Endothelial cell of umbilical vein (primary cell): ENCODE measurements at regions of chr19 and their contacts with region 1.

Region 1: DNA sequence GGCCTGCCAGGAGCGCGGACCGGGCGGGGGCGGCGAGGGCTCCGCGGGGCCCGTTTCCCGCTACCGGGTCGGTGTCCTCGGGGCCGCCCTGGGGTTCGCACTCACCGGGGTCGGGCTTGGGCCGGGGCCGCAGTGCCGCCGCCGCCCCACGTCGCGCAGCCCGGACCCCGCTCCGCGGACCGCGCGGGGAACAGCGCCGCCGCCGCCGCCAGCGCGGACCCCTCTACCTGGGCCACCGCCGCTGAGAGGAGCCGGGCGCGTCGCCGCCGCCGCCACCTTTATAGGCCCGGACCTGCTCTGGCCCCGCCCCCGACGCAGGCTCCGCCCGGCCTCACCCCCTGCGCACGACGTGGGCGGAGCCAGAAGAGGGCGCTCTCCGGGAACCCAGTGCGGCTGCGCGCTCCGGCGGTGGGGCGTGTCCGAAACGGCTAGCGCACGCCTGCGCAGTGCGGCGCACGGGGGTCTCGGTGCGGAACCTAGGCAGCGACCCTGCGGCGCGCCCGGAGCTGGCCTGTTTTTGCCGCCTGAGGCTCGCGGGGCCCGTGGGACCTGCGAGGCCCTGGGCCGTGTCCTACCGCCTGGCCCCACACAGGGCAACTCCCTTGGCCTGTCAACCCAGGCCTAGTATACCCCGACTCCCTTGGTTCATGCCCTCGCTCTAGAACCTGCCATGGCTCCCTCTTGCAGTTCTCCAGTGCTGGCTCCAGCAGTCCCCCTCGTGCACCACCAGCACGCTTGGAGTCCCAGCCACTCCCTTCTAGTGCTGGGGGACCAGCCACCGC is at the start of gene MKNK2:
- DNase-seq: peak; percentile 80
- H3K4me3 ChIP-seq: peak within 1 kb of the TSS; percentile 81 to 95 (median 81)
- H3K27ac ChIP-seq: no peak within 1 kb of the TSS
- H3K4me1 ChIP-seq: peaks cover 29% of the 10 kb centered on the region
- H3K27me3 ChIP-seq: no peaks in the 10 kb centered on the region
- CTCF ChIP-seq: peak; percentile 59 to 61
- POLR2A ChIP-seq: peak; percentile 100
- total RNA-seq, gene MKNK2: 86.1 and 87.5 TPM in 2 replicates

Region 2: DNA sequence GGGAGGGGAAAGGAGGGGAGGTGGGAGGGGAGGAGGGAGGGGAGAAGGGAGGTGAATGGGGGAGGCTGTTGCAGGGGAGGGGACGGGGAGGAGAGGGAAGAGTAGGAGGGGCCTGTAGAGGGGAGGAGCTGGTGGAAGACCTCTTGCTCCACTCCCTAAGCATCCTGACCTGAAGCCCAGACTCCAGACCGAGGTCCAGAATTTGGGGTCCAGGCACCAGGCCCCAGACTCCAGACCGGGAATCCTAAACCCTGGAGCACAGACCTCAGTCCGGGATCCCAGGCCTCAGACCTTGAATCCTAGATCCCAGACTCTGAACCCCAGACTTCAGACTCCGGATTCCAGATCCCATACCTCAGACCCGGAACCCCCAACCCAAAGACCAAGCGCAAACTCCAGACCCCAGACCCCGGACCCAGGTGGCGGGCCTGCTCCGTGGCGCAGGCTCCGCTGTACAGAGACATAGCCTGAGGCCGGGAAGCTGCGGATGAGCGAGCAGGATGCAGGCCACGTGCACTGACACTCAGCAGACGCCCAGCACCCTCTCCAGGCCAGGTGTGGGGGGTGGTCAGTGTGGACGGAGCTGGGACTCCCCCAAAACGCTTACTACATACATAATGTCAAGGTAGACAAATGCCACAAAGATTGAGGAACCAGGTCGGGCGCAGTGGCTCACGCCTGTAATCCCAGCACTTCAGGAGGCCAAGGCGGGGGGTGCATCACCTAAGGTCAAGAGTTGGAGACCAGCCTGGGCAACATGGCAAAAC is 35.0 kb before region 1 on chr19:
- CTCF ChIA-PET with region 1: interaction called, 11 read pairs
- POLR2A ChIA-PET with region 1: no interaction called
- dilution Hi-C with region 1: no loop called
- intact Hi-C with region 1: loop called (anchors 1 kb)
- DNase-seq: peak; percentile 42
- H3K4me3 ChIP-seq: peak overlapping the region in 1 of 3 experiments; percentile 22
- H3K27ac ChIP-seq: no peak overlapping the region
- H3K4me1 ChIP-seq: no peaks in the 10 kb centered on the region
- H3K27me3 ChIP-seq: no peaks in the 10 kb centered on the region
- CTCF ChIP-seq: no peak
- POLR2A ChIP-seq: no peak

Region 3: GRCh38 chr19:2032296-2032941 is 18.8 kb before region 1 on chr19:
- CTCF ChIA-PET with region 1: interaction called, 5 read pairs
- POLR2A ChIA-PET with region 1: no interaction called
- dilution Hi-C with region 1: no loop called
- intact Hi-C with region 1: loop called (anchors 1 kb)
- DNase-seq: peak; percentile 92
- H3K4me3 ChIP-seq: no peak overlapping the region
- H3K27ac ChIP-seq: peak overlapping the region; percentile 60
- H3K4me1 ChIP-seq: peaks cover 17% of the 10 kb centered on the region
- H3K27me3 ChIP-seq: no peaks in the 10 kb centered on the region
- CTCF ChIP-seq: no peak
- POLR2A ChIP-seq: peak; percentile 70

Region 4: DNA sequence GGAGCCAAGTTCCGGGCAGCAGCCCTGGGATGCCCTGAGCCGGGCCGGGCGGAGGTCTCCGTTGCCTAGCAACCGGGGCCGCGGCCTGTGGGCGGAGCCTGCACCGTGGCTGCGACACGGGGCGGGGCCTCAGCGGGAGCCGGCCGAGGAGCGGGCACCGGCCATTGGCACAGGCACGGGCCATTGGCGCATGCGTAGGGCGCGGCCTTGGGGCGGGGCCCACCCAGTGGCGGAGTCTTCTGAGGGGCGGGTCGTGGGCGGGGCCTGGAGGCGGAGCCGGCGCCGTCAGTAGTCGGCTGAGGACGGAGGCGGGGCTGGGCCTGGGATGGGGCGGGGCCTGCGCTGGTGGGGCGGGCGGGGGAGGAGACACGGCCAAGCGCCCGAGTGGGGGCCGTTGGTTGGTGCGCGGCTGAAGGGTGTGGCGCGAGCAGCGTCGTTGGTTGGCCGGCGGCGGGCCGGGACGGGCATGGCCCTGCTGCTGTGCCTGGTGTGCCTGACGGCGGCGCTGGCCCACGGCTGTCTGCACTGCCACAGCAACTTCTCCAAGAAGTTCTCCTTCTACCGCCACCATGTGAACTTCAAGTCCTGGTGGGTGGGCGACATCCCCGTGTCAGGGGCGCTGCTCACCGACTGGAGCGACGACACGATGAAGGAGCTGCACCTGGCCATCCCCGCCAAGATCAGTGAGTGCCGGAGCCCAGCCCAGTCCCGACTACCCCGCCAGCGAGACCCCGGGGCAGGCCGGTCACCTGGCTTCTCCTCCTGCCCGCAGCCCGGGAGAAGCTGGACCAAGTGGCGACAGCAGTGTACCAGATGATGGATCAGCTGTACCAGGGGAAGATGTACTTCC is 45.5 kb after region 1 on chr19 and contains the start of gene IZUMO4:
- CTCF ChIA-PET with region 1: no interaction called
- POLR2A ChIA-PET with region 1: no interaction called
- dilution Hi-C with region 1: no loop called
- intact Hi-C with region 1: loop called (anchors 1 kb)
- DNase-seq: peak; percentile 97
- H3K4me3 ChIP-seq: peak within 1 kb of the TSS; percentile 58 to 90 (median 75)
- H3K27ac ChIP-seq: peak within 1 kb of the TSS; percentile 75
- H3K4me1 ChIP-seq: peaks cover 13% of the 10 kb centered on the region
- H3K27me3 ChIP-seq: no peaks in the 10 kb centered on the region
- CTCF ChIP-seq: peak in 1 of 2 donors; percentile 58
- POLR2A ChIP-seq: no peak
- total RNA-seq, gene IZUMO4: 1.1 and 2.0 TPM in 2 replicates